ENCODE measurements at regions of chr6 and their contacts with region 1.

Region 1: GRCh38 chr6:96897383-96898240 is at the start of gene NDUFAF4:
- DNase-seq: peak; percentile 72 to 97
- H3K4me3 ChIP-seq: peak within 1 kb of the TSS; percentile 80 to 89 (median 88)
- H3K27ac ChIP-seq: peak within 1 kb of the TSS; percentile 63
- H3K4me1 ChIP-seq: peaks cover 0 to 2% (median 0%) of the 10 kb centered on the region in 4 experiments; a peak in 1 of 7 replicates
- H3K27me3 ChIP-seq: no peaks in the 10 kb centered on the region
- CTCF ChIP-seq: peak; percentile 64 to 84 (median 82)
- EP300 ChIP-seq: peak in 1 of 2 experiments; percentile 23; a peak in 1 of 3 replicates
- POLR2A ChIP-seq: peak; percentile 75 to 86
- RAD21 ChIP-seq: peak; percentile 70 to 75
- total RNA-seq, gene NDUFAF4: 84.4 and 84.9 TPM in 2 replicates

Region 2: DNA sequence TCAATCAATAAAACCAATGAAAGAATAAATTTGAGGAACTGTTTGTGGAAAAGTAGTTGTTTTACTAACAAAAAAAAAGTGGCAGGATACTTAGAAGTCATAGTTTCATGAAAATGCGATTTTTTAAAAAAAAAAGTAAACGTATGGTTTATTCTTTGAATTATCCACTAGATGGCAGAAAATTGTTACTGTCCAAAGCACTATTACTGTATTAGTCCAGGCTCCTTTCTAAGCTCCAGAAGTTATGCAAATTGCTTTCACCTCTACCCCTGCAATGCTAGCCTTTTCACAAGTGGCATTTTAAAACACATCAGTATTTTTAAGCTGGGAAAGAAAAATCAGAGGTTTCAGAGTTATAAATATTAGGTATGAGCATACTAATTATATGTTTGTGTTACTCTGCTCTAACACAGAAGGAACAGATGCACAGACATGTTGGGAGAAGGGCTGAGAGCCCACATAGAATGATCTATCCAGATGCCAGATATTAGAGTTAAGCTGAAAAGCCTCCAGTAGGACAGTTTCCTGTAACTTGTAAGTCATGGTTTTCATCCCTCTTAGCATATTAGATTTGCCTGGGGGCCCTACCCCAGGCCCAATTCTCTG is 270.8 kb before region 1 on chr6:
- CTCF ChIA-PET with region 1: interaction called, 12 read pairs
- POLR2A ChIA-PET with region 1: no interaction called
- DNase-seq: no peak
- H3K4me3 ChIP-seq: no peak overlapping the region
- H3K27ac ChIP-seq: no peak overlapping the region
- H3K4me1 ChIP-seq: no peaks in the 10 kb centered on the region
- H3K27me3 ChIP-seq: no peaks in the 10 kb centered on the region
- CTCF ChIP-seq: no peak; a peak in 1 of 4 replicates
- EP300 ChIP-seq: no peak
- POLR2A ChIP-seq: no peak
- RAD21 ChIP-seq: peak; percentile 58 to 59

Region 3: GRCh38 chr6:96917098-96917497 is 19.5 kb after region 1 on chr6:
- CTCF ChIA-PET with region 1: interaction called, 28 read pairs
- POLR2A ChIA-PET with region 1: interaction called, 4 read pairs
- DNase-seq: no peak
- H3K4me3 ChIP-seq: no peak overlapping the region
- H3K27ac ChIP-seq: no peak overlapping the region
- H3K4me1 ChIP-seq: no peaks in the 10 kb centered on the region
- H3K27me3 ChIP-seq: peaks cover 0 to 1% (median 0%) of the 10 kb centered on the region in 4 experiments; a peak in 1 of 7 replicates
- CTCF ChIP-seq: no peak
- EP300 ChIP-seq: no peak
- POLR2A ChIP-seq: no peak
- RAD21 ChIP-seq: no peak

Region 4: GRCh38 chr6:96923400-96923799 is 25.8 kb after region 1 on chr6:
- CTCF ChIA-PET with region 1: interaction called, 26 read pairs
- POLR2A ChIA-PET with region 1: interaction called, 7 read pairs
- DNase-seq: no peak
- H3K4me3 ChIP-seq: peak overlapping the region in 2 of 4 experiments; percentile 92 to 100; a peak in 3 of 8 replicates
- H3K27ac ChIP-seq: no peak overlapping the region
- H3K4me1 ChIP-seq: peaks cover 0 to 7% (median 4%) of the 10 kb centered on the region in 4 experiments; a peak in 5 of 7 replicates
- H3K27me3 ChIP-seq: no peaks in the 10 kb centered on the region
- CTCF ChIP-seq: no peak
- EP300 ChIP-seq: no peak
- POLR2A ChIP-seq: no peak
- RAD21 ChIP-seq: no peak

Region 5: DNA sequence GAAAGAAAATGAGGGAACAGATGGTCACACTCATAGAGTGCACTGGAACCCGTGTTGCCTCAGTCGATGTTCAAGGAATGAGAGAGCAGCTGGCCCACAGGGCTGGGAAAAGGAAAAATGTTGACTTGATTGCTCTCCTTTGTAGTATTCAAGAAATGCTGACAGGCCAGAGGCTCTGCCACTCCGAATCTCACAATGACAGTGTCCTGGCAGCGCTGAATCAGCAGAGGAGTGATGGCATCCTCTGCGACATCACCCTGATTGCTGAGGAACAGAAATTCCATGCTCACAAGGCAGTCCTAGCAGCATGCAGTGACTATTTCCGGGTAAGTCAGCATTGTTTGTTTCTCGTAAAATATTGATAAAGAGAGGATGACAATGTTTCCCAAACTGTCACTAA is 78.2 kb after region 1 on chr6:
- CTCF ChIA-PET with region 1: no interaction called
- POLR2A ChIA-PET with region 1: no interaction called
- DNase-seq: no peak
- H3K4me3 ChIP-seq: no peak overlapping the region
- H3K27ac ChIP-seq: no peak overlapping the region
- H3K4me1 ChIP-seq: no peaks in the 10 kb centered on the region
- H3K27me3 ChIP-seq: no peaks in the 10 kb centered on the region
- CTCF ChIP-seq: no peak
- EP300 ChIP-seq: no peak
- POLR2A ChIP-seq: no peak
- RAD21 ChIP-seq: no peak

Region 6: DNA sequence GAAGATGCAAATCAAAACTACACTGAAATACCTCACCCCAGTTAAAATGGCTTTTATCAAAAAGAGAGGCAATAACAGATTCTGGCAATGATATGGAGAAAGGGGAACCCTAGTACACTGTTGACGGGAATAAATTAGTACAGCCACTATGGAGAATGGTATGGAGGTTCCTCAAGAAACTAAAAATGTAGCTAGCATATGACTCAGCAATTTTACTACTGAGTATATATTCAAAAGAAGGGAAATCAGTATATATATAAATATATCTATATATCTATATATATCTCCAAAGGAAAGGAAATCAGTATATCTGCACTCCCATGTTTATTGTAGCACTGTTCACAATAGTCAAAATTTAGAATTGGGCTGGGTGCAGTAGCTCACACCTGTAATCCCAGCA is 140.8 kb after region 1 on chr6:
- CTCF ChIA-PET with region 1: interaction called, 12 read pairs
- POLR2A ChIA-PET with region 1: interaction called, 4 read pairs
- DNase-seq: no peak
- H3K4me3 ChIP-seq: no peak overlapping the region
- H3K27ac ChIP-seq: no peak overlapping the region
- H3K4me1 ChIP-seq: 0 out of 7 replicates have a peak, but pooled peaks cover 0 to 2% (median 0%) of the 10 kb centered on the region in 4 experiments
- H3K27me3 ChIP-seq: no peaks in the 10 kb centered on the region
- CTCF ChIP-seq: no peak
- EP300 ChIP-seq: no peak
- POLR2A ChIP-seq: no peak
- RAD21 ChIP-seq: no peak

Region 7: GRCh38 chr6:97059473-97059872 is 161.9 kb after region 1 on chr6:
- CTCF ChIA-PET with region 1: interaction called, 117 read pairs
- POLR2A ChIA-PET with region 1: interaction called, 3 read pairs
- DNase-seq: no peak
- H3K4me3 ChIP-seq: no peak overlapping the region
- H3K27ac ChIP-seq: no peak overlapping the region
- H3K4me1 ChIP-seq: peaks cover 0 to under 1% (median 0%) of the 10 kb centered on the region in 4 experiments; a peak in 1 of 7 replicates
- H3K27me3 ChIP-seq: no peaks in the 10 kb centered on the region
- CTCF ChIP-seq: peak in 2 of 3 experiments; percentile 18 to 21; a peak in 2 of 4 replicates
- EP300 ChIP-seq: no peak
- POLR2A ChIP-seq: no peak
- RAD21 ChIP-seq: peak; percentile 62 to 75

Measured in H1 (cell line).